Calu3 (cell line): ENCODE measurements at regions of chr3 and their contacts with region 1.

Region 1: GRCh38 chr3:123757281-123757940 is 126.7 kb downstream of the MYLK start:
- DNase-seq: peak; percentile 60
- H3K4me3 Mint-ChIP-seq: peak overlapping the region; percentile 48
- H3K27ac Mint-ChIP-seq: peak overlapping the region; percentile 46
- H3K4me1 Mint-ChIP-seq: peaks cover 56% of the 10 kb centered on the region
- H3K27me3 Mint-ChIP-seq: no peaks in the 10 kb centered on the region
- CTCF ChIP-seq: no peak

Region 2: GRCh38 chr3:123618768-123619484 is 138.5 kb before region 1 on chr3:
- CTCF ChIA-PET with region 1: no interaction called
- intact Hi-C with region 1: no loop called
- DNase-seq: peak; percentile 46
- H3K4me3 Mint-ChIP-seq: no peak overlapping the region
- H3K27ac Mint-ChIP-seq: no peak overlapping the region
- H3K4me1 Mint-ChIP-seq: peaks cover 14% of the 10 kb centered on the region
- H3K27me3 Mint-ChIP-seq: no peaks in the 10 kb centered on the region
- CTCF ChIP-seq: no peak

Region 3: DNA sequence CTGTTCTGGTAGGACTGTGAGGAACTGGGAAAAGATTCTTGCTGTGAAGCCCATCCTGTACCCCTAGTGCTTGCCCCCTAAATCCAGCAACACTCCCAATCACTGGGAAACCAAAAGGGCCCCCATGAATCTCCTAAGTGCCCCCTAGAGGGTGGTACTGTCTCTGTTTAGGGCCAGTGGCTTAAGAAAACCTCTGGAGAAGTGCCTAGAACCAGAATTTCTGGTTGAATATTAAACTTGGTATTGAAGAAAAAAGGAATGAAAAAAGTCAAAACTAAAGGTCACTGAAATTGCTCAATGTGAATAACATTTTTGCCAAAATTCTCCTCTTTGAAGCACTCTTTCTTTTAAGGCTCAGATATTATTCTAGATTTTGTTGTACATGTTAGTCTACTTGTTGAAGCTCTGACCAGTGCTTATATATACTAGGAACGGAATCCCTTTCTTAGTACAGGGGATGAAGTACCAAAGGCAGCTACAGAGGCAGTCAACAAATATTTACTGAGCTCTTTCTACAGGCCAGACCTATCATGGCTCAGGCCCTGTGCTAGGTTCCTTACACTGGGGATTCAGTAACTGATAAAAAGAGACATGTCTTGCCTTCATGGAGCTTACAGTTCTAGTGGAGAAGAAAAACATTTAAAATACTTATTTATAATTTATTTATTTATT is 12.1 kb before region 1 on chr3:
- CTCF ChIA-PET with region 1: no interaction called
- intact Hi-C with region 1: no loop called
- DNase-seq: peak; percentile 35
- H3K4me3 Mint-ChIP-seq: no peak overlapping the region
- H3K27ac Mint-ChIP-seq: no peak overlapping the region
- H3K4me1 Mint-ChIP-seq: peaks cover 3% of the 10 kb centered on the region
- H3K27me3 Mint-ChIP-seq: no peaks in the 10 kb centered on the region
- CTCF ChIP-seq: no peak

Region 4: DNA sequence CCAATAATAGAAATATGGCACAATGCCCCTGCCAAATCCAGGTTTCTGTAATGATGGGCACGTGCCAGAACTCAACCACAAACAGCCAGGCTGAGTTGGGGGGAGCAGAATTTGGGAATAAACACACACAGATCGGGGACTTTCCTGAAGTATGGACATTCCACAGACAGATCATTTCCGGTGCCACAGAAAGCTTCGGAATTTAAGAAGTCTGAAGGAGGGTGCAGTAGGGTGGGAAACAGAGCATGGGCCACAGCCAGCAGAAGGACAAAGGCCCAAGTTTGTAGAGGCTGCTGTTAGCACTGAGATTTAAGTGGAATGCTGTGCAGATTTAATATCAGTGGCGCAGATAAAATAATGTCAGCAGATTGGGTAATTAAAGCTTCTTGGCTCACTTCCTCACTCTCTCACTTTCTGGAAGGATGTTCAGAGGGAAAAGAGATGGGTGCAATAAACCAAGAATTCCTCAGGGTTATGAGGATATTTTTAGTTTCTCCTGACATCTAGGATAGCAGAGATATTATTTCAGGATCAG is 59.3 kb after region 1 on chr3:
- CTCF ChIA-PET with region 1: no interaction called
- intact Hi-C with region 1: loop called (anchors 5 kb)
- DNase-seq: no peak
- H3K4me3 Mint-ChIP-seq: no peak overlapping the region
- H3K27ac Mint-ChIP-seq: no peak overlapping the region
- H3K4me1 Mint-ChIP-seq: peaks cover 34% of the 10 kb centered on the region
- H3K27me3 Mint-ChIP-seq: no peaks in the 10 kb centered on the region
- CTCF ChIP-seq: no peak

Region 5: GRCh38 chr3:123880998-123881561 is 123.7 kb after region 1 on chr3:
- CTCF ChIA-PET with region 1: no interaction called
- intact Hi-C with region 1: loop called (anchors 2 kb)
- DNase-seq: peak; percentile 42
- H3K4me3 Mint-ChIP-seq: no peak overlapping the region
- H3K27ac Mint-ChIP-seq: no peak overlapping the region
- H3K4me1 Mint-ChIP-seq: peaks cover 20% of the 10 kb centered on the region
- H3K27me3 Mint-ChIP-seq: no peaks in the 10 kb centered on the region
- CTCF ChIP-seq: no peak

Region 6: DNA sequence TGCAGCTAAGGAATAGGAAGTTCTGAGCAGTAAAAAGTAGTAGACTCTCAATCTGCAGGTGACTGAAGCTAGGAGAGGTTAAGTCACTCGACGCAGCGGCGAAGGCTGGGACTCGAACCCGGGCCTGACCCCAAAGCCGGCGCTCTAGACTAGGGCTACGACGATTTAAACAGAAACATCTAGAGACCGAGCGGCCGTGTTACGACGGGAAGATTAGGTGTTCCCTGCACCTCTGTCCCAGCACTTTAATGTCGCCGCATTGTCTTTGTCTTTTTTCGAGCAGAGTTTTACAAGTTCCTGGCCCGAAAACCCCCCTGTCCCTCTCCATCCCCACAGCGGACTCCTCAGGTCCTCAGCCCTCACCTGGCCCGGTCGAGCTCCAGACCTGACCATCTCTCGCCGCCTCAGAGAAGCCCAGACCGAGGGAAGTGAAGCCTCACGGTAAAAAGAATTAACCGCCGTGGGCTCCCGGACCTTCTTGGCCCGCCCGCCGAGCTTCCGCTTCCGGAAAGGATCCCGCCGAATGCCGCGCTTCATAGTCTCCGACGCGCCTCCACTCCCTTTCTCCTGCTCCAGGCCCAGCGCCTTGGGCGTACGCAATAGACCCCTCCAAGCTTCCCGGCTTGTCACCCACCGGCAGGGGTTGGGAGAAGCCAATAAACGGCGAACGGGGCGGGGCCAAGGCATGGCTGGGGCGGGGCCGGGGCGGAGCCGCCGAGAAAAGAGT is 203.5 kb after region 1 on chr3 and contains the start of gene CCDC14:
- CTCF ChIA-PET with region 1: no interaction called
- intact Hi-C with region 1: loop called (anchors 10 kb)
- DNase-seq: peak; percentile 92
- H3K4me3 Mint-ChIP-seq: peak within 1 kb of the TSS; percentile 86
- H3K27ac Mint-ChIP-seq: peak within 1 kb of the TSS; percentile 79
- H3K4me1 Mint-ChIP-seq: peaks cover 9% of the 10 kb centered on the region
- H3K27me3 Mint-ChIP-seq: peaks cover 19% of the 10 kb centered on the region
- CTCF ChIP-seq: no peak
- total RNA-seq, gene CCDC14: 53.0 and 60.6 TPM in 2 replicates